ENCODE measurements at regions of chr20 and their contacts with region 1.

Region 1: GRCh38 chr20:23350196-23350903 is at the start of gene NXT1:
- DNase-seq: peak; percentile 87 to 98 (median 93)
- ATAC-seq: peak; percentile 87 to 89 (median 88)
- H3K4me3 ChIP-seq: peak within 1 kb of the TSS; percentile 70 to 89
- H3K4me3 Mint-ChIP-seq: peak within 1 kb of the TSS; percentile 97 to 99 (median 98)
- H3K27ac ChIP-seq: peak within 1 kb of the TSS; percentile 97
- H3K27ac Mint-ChIP-seq: peak within 1 kb of the TSS; percentile 99 to 100
- H3K4me1 ChIP-seq: peaks cover 14 to 23% of the 10 kb centered on the region in 2 experiments
- H3K4me1 Mint-ChIP-seq: peaks cover 19 to 29% (median 27%) of the 10 kb centered on the region in 3 donors
- H3K27me3 ChIP-seq: no peaks in the 10 kb centered on the region
- H3K27me3 Mint-ChIP-seq: no peaks in the 10 kb centered on the region
- total RNA-seq, gene NXT1: 22.1 to 60.0 (median 24.4) TPM

Region 2: DNA sequence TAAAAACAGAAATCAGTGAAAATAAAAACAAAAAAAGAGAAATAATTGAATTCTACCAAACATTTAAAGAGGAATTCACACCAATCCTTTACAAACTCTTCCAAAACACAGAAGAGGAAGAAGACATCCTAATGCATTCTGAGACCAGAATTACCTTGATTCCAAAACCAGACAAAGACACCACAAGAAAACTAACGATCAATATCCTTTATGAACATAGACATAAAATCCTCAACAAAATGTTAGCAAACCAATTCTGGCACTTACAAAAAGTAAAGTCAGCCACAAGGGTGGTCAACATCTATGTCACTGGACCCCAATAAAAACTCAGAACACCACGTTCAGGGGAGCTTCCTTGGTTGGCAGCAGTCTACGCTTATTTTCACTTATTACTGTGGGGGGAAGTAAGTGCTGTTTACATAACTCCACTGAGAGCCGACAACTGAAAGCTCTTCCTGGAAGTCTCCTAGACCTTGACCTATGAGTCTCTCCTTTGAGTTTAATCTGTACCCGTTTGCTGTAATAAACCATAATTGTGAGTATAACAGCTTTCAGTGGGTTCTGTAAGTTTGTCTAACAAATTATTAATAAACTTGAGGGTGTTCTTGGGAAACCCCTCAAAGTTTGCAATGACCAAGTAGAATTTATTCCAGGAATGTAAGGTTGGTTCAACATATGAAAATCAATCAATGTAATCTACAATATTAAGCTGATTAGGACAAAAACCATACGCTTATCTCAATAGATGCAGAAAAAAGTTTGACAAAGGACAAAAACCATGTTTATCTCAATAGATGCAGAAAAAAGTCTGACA is 36.2 kb after region 1 on chr20:
- CTCF ChIA-PET with region 1: interaction called, 4 to 21 read pairs
- POLR2A ChIA-PET with region 1: no interaction called
- DNase-seq: no peak
- ATAC-seq: no peak
- H3K4me3 ChIP-seq: no peak overlapping the region
- H3K4me3 Mint-ChIP-seq: no peak overlapping the region
- H3K27ac ChIP-seq: no peak overlapping the region
- H3K27ac Mint-ChIP-seq: peak overlapping the region in 1 of 2 donors; percentile 40
- H3K4me1 ChIP-seq: no peaks in the 10 kb centered on the region
- H3K4me1 Mint-ChIP-seq: peaks cover 0 to 10% (median 3%) of the 10 kb centered on the region in 3 donors
- H3K27me3 ChIP-seq: no peaks in the 10 kb centered on the region
- H3K27me3 Mint-ChIP-seq: no peaks in the 10 kb centered on the region

Region 3: GRCh38 chr20:23420943-23421931 is 70.9 kb after region 1 on chr20 and contains the start of gene NAPB:
- CTCF ChIA-PET with region 1: interaction called, 4 to 38 read pairs
- POLR2A ChIA-PET with region 1: interaction called in 1 of 2 experiments, 17 read pairs
- DNase-seq: peak; percentile 84 to 96 (median 91)
- ATAC-seq: peak; percentile 99
- H3K4me3 ChIP-seq: peak within 1 kb of the TSS; percentile 75 to 98
- H3K4me3 Mint-ChIP-seq: peak within 1 kb of the TSS; percentile 89 to 93 (median 91)
- H3K27ac ChIP-seq: peak within 1 kb of the TSS; percentile 66
- H3K27ac Mint-ChIP-seq: peak within 1 kb of the TSS; percentile 36 to 68
- H3K4me1 ChIP-seq: peaks cover 17 to 21% of the 10 kb centered on the region in 2 experiments
- H3K4me1 Mint-ChIP-seq: peaks cover 37 to 62% (median 40%) of the 10 kb centered on the region in 3 donors
- H3K27me3 ChIP-seq: peaks cover 0 to 4% of the 10 kb centered on the region in 2 experiments
- H3K27me3 Mint-ChIP-seq: peaks cover 0 to 6% of the 10 kb centered on the region in 2 donors
- total RNA-seq, gene NAPB: 10.4 to 14.6 (median 12.2) TPM

Region 4: DNA sequence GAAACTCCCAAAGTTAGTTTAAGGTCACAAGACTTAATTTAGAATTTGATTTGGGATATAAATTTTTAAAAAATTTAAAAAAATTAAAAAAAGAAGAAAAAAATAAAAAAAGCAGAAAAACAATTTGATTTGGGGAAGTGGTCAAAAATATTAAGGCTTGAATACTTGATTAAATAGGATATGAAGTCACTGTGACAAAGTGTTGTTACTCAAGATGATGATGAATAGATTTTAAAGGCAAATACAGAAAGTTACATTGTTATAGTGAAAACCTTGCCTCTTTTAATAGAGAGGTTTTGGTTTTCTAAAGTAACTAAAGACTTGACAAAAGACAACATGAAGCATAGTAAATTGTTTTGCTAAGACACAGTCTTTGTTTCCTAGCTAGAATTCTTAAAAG is 248.1 kb after region 1 on chr20:
- CTCF ChIA-PET with region 1: no interaction called
- POLR2A ChIA-PET with region 1: no interaction called
- DNase-seq: no peak
- ATAC-seq: no peak
- H3K4me3 ChIP-seq: no peak overlapping the region
- H3K4me3 Mint-ChIP-seq: no peak overlapping the region
- H3K27ac ChIP-seq: no peak overlapping the region
- H3K27ac Mint-ChIP-seq: no peak overlapping the region
- H3K4me1 ChIP-seq: no peaks in the 10 kb centered on the region
- H3K4me1 Mint-ChIP-seq: no peaks in the 10 kb centered on the region
- H3K27me3 ChIP-seq: peaks cover 0 to 16% of the 10 kb centered on the region in 2 experiments
- H3K27me3 Mint-ChIP-seq: peaks cover 4 to 8% of the 10 kb centered on the region in 2 donors